Right ventricle myocardium superior (tissue), 1 donor: ENCODE measurements at regions of chr16 and their contacts with region 1.

Region 1: DNA sequence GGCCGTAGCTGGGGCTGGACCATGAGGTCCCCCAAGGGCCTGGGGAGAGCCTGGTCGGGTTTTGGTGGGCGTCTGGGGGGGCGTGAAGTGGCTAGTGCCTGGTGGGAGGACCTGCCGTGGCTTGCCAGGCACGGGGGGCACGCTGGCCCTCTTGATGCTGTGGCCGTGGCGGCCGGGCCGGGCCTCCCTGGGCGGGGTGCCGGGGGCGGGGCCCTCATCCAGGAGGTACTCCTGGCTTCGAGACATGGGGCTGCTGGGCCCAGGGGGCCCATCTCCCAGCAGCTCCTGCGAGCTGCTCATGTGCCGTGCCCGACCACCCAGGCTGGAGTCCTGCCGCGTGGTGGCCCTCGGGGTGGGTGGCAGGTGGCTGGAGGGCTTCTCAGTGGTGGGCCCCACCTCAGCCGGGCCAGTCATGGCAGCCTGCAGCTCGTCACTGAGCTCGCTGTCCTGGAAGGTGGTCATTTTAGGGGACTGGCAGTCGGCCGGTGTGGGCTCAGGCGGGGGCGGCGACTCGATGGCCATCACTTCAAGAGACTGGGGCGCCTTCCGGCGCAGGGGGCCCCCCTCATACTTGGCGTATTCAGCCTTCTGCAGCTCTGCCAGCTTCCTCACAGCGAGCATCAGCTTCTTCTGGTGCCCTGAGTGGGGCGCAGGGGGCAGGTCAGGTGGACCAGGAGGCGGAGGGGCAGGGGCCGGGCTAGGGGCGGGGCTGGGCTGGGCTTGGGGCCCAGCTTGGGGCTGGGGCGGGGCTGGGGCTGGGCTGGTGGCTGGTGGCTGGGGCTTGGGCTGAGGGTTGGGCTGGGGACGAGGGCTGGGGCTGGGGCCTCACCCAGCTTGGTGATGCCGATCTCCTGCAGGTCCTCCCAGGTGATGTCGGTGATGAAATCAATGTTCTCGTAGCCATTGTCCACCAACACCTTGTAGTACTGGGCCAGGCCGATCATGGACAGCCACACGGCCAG is 15.2 kb downstream of the CASKIN1 start:
- DNase-seq: no peak
- ATAC-seq: no peak

Region 2: GRCh38 chr16:1481906-1482835 is 699.1 kb before region 1 on chr16:
- intact Hi-C with region 1: no loop called
- DNase-seq: no peak
- ATAC-seq: no peak

Region 3: GRCh38 chr16:2244245-2244691 is 63.0 kb after region 1 on chr16:
- intact Hi-C with region 1: loop called (anchors 10 kb)
- DNase-seq: no peak
- ATAC-seq: no peak